ENCODE measurements at regions of chr11 and their contacts with region 1.

Region 1: DNA sequence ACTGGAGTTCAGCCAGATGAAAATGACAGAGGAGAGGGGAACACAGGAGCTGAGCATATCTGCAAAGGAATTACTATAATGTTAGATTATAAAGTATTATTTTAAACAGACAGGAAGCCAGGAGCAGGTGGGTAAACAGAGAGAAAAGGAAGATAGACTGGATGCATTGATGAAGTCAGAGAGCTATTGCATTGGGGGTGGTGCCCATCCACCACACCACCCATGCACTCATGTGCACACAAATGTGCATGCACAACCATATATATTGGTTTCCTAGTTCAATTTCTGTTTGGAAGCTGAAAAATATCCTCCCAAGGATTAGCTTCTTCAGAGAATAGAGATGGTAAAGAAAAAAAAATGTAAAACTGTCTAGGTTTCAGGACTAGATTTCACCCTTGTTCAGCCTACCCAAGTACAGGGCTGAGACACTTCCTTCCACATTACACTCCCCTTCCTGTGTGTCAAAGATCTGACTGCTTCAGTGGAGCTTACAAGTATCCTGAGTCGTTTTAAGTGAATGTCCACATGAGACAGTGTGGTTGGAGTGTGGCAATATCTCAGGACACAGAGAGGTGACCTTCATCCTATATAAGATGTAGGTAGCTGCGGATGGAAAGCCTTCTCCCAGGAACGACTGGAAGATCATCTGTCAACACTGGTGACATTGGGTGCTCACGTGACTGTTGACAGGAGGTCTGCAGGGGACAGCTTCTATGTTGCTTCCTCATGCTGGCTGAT is 12.2 kb upstream of the SMPD1 start:
- DNase-seq: no peak
- ATAC-seq: peak; percentile 34

Region 2: DNA sequence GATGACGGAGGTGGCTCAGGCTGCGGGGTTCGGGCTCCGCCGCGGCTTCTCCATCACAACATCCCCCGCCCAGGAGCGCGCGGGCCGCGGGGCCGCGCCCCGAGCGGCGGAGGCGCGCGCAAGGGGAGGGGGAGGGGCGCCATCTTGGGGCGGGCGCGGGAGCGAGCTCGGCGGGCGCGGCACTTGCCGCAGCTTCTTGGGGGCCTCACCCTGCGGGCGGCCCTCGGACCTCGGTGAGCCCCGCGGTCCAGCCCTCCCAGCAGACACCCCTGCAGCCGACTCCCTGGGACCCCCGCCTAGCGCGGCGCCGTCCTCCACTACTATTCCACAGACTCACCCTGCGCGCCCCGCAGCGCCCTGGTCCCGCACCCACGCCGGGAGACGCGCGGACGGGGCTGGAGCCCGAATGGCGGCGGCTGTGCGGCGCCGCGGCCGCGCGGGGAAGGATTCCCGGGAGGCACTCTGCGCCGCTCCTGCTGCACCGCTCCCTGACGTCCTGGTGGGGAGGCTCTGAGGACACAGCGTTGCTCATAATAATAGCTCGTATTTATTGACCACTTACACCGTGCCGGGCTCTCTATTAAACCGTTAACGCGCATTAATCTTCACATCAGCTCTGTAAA is 41.0 kb after region 1 on chr11 and contains the start of gene APBB1:
- intact Hi-C with region 1: loop called (anchors 5 kb)
- DNase-seq: peak; percentile 77
- ATAC-seq: peak; percentile 94
- total RNA-seq, gene APBB1: 85.5 TPM

Region 3: GRCh38 chr11:6443269-6444003 is 65.4 kb after region 1 on chr11:
- intact Hi-C with region 1: loop called (anchors 1 kb)
- DNase-seq: no peak
- ATAC-seq: peak; percentile 76

Region 4: DNA sequence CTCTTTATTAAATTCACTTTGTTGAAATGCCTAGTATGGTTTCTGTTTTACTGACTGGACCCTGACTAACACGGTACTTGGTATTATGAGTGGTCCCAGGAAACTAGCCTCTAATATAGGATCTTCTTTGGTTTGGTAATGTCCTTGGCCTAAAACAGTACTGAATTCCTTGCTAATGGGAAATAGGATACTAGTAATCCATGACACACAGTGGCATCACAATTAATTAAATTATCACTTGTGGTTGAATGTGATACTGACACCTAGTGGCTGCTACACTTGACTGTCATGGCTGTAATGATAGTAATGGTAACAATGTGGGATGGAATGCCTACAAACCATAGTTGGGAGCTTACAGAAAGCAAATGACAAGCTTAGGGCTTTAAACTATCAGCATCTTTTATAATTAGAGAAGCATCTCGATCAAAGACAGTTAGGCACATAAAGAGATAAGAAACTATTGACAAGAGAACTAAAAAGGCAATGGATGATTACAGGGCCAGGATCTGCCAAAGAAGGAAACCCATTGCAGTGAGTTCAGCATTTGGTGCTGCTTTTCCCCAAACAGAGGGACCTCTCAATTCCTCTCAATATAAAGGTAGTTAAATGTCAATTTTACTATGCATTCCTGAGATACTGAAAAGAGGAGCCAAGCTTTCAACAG is 127.6 kb after region 1 on chr11:
- intact Hi-C with region 1: loop called (anchors 2 kb)
- DNase-seq: no peak
- ATAC-seq: no peak

Region 5: GRCh38 chr11:6705905-6706535 is 327.9 kb after region 1 on chr11:
- intact Hi-C with region 1: loop called (anchors 2 kb)
- DNase-seq: no peak
- ATAC-seq: peak; percentile 60